Posterior cingulate gyrus (tissue), 11 donors: ENCODE measurements at regions of chr1 and their contacts with region 1.

Region 1: DNA sequence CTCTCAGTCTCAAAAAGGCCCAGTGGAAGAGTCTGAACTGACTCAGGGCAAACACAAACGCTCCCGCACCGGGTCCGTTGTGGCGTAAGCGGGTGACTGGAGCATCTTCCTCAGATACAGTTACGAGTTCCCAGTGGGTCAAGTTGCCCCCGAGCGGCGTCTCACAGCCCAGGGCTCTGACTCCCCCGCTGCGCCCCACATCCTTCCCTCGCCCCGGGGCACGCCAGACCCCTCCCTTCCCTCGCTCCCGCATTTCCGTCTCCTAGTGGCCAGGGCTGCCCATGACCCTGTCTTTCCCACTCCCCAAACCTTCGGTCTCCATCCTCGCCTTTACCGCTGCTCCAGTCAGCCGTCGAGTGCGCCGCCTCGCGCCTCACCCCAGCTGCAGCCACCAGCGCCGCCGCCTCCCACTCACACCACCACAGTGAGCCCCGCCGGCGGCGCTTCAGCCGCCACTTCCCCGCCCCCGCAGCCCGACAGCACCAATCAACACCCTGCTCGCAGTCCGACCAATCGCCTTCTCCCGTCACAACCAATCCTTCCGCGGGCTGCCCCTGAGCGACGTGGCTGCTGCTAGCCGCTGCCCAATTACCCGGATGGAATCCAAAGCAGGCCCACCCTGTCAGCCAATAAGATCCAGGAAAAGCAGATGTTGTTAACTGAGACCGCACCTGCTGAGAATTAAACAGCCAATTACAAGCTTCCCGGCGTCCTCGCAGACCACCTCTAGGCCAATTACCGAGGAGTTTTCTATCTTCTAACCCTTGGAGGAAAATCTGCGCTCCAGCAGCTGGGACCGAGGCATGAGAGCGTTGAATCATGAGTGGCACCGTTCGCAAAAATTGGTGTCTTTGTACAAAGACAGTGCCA is at the start of gene TDRKH:
- DNase-seq: peak; percentile 96 to 100 (median 98)

Region 2: GRCh38 chr1:151762941-151763921 is 27.1 kb before region 1 on chr1 and contains the start of gene MRPL9:
- intact Hi-C with region 1: loop called (anchors 2 kb)
- DNase-seq: peak; percentile 78 to 97 (median 85)

Region 3: DNA sequence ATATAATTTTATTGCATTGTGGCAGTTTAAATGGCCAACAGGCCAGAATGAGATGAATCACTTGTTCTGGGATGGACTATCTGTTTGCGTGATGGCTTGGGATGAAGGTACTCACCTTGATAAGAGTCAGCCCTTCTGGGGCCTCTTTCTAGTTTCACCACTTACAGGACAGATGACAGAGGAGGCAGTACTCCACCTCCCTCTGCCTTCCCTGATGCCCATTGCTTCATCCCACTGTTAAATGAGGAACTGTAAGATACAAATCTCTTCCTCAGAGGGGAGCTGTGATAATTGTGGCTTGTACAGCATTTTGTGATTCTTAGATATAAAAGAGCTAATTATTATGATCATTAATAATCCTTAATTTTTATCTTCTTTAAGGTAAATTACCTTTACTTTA is 328.6 kb after region 1 on chr1:
- intact Hi-C with region 1: no loop called
- DNase-seq: no peak